Posterior cingulate gyrus (tissue), 11 donors: ENCODE measurements at regions of chr1 and their contacts with region 1.

Region 1: DNA sequence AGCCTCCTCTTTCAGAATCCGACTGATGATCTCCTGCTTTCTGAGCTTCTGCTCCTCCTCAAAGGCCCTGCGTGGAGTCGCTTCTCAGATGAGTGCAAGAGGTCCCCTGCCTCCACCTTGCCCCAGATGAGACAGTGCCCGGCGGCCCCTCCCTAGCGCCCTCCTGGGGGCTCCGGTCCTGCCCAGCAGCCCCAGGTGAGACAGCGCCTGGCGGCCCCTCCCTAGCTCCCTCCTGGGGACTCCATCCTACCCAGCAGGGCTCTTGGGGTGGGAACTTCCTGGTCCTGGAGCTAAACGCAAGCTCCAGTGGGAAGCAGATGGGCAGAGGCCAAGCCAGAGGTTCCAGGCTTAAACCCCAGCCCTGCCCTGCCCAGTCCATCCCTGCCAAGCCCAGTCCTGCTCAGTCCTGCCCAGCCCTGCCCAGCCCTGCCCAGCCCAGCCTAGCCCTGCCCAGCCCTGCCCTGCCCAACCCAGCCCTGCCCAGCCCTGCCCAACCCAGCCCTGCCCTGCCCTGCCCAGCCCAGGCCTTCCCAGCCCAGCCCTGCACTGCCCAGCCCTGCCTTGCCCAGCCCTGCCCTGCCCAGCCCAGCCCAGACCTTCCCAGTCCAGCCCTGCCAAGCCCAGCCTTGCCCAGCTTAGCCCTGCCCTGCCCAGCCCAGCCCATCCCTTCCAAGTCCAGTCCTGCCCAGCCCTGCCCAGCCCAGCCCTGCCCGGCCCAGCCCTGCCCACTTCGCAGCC is 34.6 kb downstream of the CFAP74 start:
- DNase-seq: no peak

Region 2: DNA sequence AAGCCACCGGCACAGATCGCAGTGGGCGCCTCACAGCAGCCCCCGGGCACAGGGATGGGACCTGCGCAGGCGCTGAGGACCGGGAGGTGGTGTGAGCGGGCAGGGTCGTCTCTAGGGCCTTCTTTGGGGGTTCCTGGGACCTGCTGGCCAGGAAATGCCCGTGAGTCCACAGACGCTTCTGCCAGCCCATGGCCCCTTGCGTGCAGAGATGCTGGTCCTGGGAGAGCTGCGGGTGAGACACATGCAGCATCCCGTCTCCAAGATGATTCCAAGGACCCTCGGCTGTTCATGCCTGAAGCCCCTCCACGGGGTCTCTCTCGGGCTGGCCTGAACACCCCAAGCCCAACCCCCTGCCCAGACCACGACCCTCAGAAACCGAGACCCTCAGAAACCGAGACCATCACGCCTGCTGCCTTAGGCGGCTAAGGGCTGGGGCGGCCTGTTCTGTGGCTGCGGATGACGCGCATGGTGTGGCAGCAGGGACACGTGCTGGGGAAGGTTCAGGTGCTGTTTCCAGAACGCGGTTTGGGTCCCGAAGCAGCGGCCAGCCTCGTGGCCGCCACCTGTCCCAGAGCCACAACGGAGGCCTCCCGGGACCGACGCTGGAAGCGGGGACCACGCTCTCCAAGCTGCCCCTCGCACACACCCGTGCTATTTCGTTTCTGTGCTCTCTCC is 11.7 kb after region 1 on chr1:
- intact Hi-C with region 1: loop called (anchors 1 kb)
- DNase-seq: no peak